ENCODE measurements at regions of chr12 and their contacts with region 1.

Region 1: GRCh38 chr12:12704593-12705230 is 8.7 kb upstream of the GPR19 start:
- DNase-seq: peak; percentile 83 to 86
- H3K4me3 ChIP-seq: no peak overlapping the region
- H3K4me3 Mint-ChIP-seq: no peak overlapping the region
- H3K27ac Mint-ChIP-seq: no peak overlapping the region
- H3K4me1 ChIP-seq: peaks cover 12% of the 10 kb centered on the region
- H3K4me1 Mint-ChIP-seq: peaks cover 15% of the 10 kb centered on the region
- H3K27me3 ChIP-seq: no peaks in the 10 kb centered on the region
- H3K27me3 Mint-ChIP-seq: no peaks in the 10 kb centered on the region
- CTCF ChIP-seq: peak; percentile 98

Region 2: DNA sequence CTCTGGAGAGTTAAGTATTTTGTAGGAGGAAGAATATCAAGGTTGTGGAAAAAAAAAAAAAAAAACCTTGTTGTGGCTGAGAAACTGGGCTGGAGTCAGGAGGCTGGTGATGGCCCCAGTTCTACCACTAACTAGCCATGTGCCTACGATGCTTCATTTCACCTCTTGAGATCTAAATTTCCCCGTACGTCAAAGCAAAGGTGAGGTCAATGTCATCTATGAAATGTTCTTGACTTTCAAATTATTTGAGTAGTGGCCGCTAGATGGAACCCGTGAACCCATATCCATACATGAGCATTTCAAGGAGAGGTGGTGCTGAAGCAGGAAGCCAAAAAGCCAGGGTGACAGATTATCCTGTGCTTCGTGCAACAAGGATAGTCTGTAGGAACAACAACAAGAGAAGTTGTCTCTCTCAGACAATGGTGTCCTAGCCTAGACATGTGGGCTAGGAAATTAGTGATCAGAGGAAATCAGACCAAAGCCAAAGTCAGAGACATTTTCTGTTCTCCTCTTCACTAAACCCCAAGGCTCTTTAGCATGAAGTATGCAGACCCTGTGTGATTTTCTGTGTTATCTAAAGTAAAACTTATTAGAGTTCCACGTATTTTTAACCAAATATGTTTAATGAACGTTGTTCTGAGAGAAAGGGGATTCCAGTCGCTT is 1150.7 kb before region 1 on chr12:
- CTCF ChIA-PET with region 1: no interaction called
- POLR2A ChIA-PET with region 1: no interaction called
- intact Hi-C with region 1: loop called (anchors 5 kb)
- DNase-seq: peak; percentile 65 to 70
- H3K4me3 ChIP-seq: no peak overlapping the region
- H3K4me3 Mint-ChIP-seq: no peak overlapping the region
- H3K27ac Mint-ChIP-seq: no peak overlapping the region
- H3K4me1 ChIP-seq: peaks cover 8% of the 10 kb centered on the region; the same call in 1 of the 2 replicates
- H3K4me1 Mint-ChIP-seq: peaks cover 12% of the 10 kb centered on the region
- H3K27me3 ChIP-seq: 0 out of 2 replicates have a peak, but pooled peaks cover 1% of the 10 kb centered on the region
- H3K27me3 Mint-ChIP-seq: peaks cover 22% of the 10 kb centered on the region
- CTCF ChIP-seq: peak; percentile 70 to 73

Region 3: GRCh38 chr12:12032851-12033588 is 671.7 kb before region 1 on chr12:
- CTCF ChIA-PET with region 1: no interaction called
- POLR2A ChIA-PET with region 1: no interaction called
- intact Hi-C with region 1: loop called (anchors 1 kb)
- DNase-seq: peak; percentile 88 to 90
- H3K4me3 ChIP-seq: peak overlapping the region; percentile 33
- H3K4me3 Mint-ChIP-seq: peak overlapping the region; percentile 63
- H3K27ac Mint-ChIP-seq: no peak overlapping the region
- H3K4me1 ChIP-seq: peaks cover 21% of the 10 kb centered on the region
- H3K4me1 Mint-ChIP-seq: peaks cover 13% of the 10 kb centered on the region
- H3K27me3 ChIP-seq: no peaks in the 10 kb centered on the region
- H3K27me3 Mint-ChIP-seq: no peaks in the 10 kb centered on the region
- CTCF ChIP-seq: peak; percentile 96 to 97

Region 4: GRCh38 chr12:12334367-12335040 is 370.2 kb before region 1 on chr12:
- CTCF ChIA-PET with region 1: no interaction called
- POLR2A ChIA-PET with region 1: no interaction called
- intact Hi-C with region 1: loop called (anchors 1 kb)
- DNase-seq: peak; percentile 75 to 83
- H3K4me3 ChIP-seq: no peak overlapping the region
- H3K4me3 Mint-ChIP-seq: no peak overlapping the region
- H3K27ac Mint-ChIP-seq: peak overlapping the region; percentile 34
- H3K4me1 ChIP-seq: peaks cover 16% of the 10 kb centered on the region
- H3K4me1 Mint-ChIP-seq: peaks cover 31% of the 10 kb centered on the region
- H3K27me3 ChIP-seq: no peaks in the 10 kb centered on the region
- H3K27me3 Mint-ChIP-seq: no peaks in the 10 kb centered on the region
- CTCF ChIP-seq: peak; percentile 89 to 99

Region 5: GRCh38 chr12:12376646-12377448 is 327.9 kb before region 1 on chr12:
- CTCF ChIA-PET with region 1: no interaction called
- POLR2A ChIA-PET with region 1: no interaction called
- intact Hi-C with region 1: loop called (anchors 1 kb)
- DNase-seq: peak; percentile 64 to 71
- H3K4me3 ChIP-seq: no peak overlapping the region
- H3K4me3 Mint-ChIP-seq: no peak overlapping the region
- H3K27ac Mint-ChIP-seq: no peak overlapping the region
- H3K4me1 ChIP-seq: peaks cover 34% of the 10 kb centered on the region
- H3K4me1 Mint-ChIP-seq: peaks cover 38% of the 10 kb centered on the region
- H3K27me3 ChIP-seq: no peaks in the 10 kb centered on the region
- H3K27me3 Mint-ChIP-seq: no peaks in the 10 kb centered on the region
- CTCF ChIP-seq: peak; percentile 72 to 96

Region 6: DNA sequence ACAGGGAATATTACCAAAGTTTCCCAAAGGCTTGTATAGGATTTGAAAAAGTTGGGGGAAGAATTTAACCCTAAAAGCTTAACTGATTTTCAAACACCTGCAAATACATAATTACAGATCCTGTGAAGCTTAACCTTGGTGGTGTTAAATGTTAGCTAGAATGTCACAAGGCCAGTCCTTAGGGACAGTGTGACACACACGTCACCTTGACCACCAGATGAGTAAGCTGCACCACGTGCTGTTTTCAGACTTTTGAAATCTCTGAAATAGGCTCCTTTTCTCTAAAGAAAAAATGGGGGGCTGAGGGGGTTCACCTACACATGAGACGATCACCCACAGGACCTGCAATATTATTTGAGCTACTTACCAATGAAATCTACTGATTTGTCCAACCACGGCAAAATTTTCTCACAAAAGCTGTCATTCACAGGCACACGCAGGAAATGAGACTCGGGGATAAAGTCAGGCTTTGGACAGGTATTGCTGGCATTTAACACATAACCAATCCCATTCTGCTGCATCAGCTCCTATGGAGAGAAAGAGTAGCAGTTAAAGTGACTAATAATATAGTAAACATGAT is 218.0 kb before region 1 on chr12:
- CTCF ChIA-PET with region 1: no interaction called
- POLR2A ChIA-PET with region 1: no interaction called
- intact Hi-C with region 1: loop called (anchors 5 kb)
- DNase-seq: no peak
- H3K4me3 ChIP-seq: no peak overlapping the region
- H3K4me3 Mint-ChIP-seq: no peak overlapping the region
- H3K27ac Mint-ChIP-seq: no peak overlapping the region
- H3K4me1 ChIP-seq: peaks cover 26% of the 10 kb centered on the region
- H3K4me1 Mint-ChIP-seq: no peaks in the 10 kb centered on the region
- H3K27me3 ChIP-seq: no peaks in the 10 kb centered on the region
- H3K27me3 Mint-ChIP-seq: no peaks in the 10 kb centered on the region
- CTCF ChIP-seq: no peak

Region 7: GRCh38 chr12:12582895-12583303 is 121.8 kb before region 1 on chr12:
- CTCF ChIA-PET with region 1: no interaction called
- POLR2A ChIA-PET with region 1: no interaction called
- intact Hi-C with region 1: no loop called
- DNase-seq: peak; percentile 67 to 72
- H3K4me3 ChIP-seq: no peak overlapping the region
- H3K4me3 Mint-ChIP-seq: no peak overlapping the region
- H3K27ac Mint-ChIP-seq: no peak overlapping the region
- H3K4me1 ChIP-seq: peaks cover 34% of the 10 kb centered on the region
- H3K4me1 Mint-ChIP-seq: peaks cover 35% of the 10 kb centered on the region
- H3K27me3 ChIP-seq: no peaks in the 10 kb centered on the region
- H3K27me3 Mint-ChIP-seq: no peaks in the 10 kb centered on the region
- CTCF ChIP-seq: no peak

Region 8: DNA sequence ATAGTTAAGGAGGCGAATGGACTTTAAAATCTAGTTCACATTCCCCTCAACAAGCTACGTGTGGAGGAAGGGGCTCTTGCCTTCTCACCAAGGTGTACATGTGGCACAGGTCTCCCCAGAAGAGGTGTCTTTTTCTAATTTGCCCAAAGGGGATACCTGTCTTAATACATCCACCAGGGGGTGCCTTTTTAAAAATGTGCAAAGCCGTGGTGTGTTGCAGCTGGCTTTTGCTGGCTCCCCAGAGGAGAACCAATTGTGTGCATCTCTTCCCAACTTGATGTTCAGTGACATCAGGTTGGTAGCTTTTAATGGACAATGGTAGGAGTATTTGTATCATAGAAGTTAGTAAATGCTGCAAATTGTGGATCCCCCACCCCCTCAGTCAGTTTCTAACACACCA is 59.2 kb before region 1 on chr12:
- CTCF ChIA-PET with region 1: no interaction called
- POLR2A ChIA-PET with region 1: no interaction called
- intact Hi-C with region 1: loop called (anchors 1 kb)
- DNase-seq: peak in 1 of 2 experiments; percentile 58
- H3K4me3 ChIP-seq: no peak overlapping the region
- H3K4me3 Mint-ChIP-seq: no peak overlapping the region
- H3K27ac Mint-ChIP-seq: no peak overlapping the region
- H3K4me1 ChIP-seq: no peaks in the 10 kb centered on the region
- H3K4me1 Mint-ChIP-seq: no peaks in the 10 kb centered on the region
- H3K27me3 ChIP-seq: no peaks in the 10 kb centered on the region
- H3K27me3 Mint-ChIP-seq: no peaks in the 10 kb centered on the region
- CTCF ChIP-seq: peak; percentile 42 to 59

Region 9: DNA sequence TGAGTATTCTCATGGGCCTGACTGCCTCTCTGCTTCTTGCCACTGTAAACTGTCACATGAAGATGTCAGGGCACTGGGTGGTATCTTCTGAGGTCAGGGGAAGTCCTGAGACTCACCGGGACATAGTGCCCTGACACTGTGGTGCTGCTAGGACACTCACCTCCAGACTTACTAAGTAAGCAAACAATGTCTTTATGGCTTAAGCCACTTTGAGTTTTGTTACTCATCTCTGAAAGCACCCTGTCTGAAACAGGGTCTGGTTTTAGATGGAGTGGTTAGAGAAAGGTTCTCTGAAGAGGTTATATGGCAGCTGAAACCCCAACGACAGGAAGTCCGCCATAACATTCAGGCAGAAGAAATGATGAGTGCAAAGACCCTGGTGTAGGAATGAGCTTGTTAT is 31.4 kb before region 1 on chr12:
- CTCF ChIA-PET with region 1: no interaction called
- POLR2A ChIA-PET with region 1: no interaction called
- intact Hi-C with region 1: no loop called
- DNase-seq: no peak
- H3K4me3 ChIP-seq: no peak overlapping the region
- H3K4me3 Mint-ChIP-seq: no peak overlapping the region
- H3K27ac Mint-ChIP-seq: no peak overlapping the region
- H3K4me1 ChIP-seq: no peaks in the 10 kb centered on the region; the same call in 1 of the 2 replicates
- H3K4me1 Mint-ChIP-seq: peaks cover 5% of the 10 kb centered on the region
- H3K27me3 ChIP-seq: no peaks in the 10 kb centered on the region
- H3K27me3 Mint-ChIP-seq: no peaks in the 10 kb centered on the region
- CTCF ChIP-seq: no peak

Region 10: DNA sequence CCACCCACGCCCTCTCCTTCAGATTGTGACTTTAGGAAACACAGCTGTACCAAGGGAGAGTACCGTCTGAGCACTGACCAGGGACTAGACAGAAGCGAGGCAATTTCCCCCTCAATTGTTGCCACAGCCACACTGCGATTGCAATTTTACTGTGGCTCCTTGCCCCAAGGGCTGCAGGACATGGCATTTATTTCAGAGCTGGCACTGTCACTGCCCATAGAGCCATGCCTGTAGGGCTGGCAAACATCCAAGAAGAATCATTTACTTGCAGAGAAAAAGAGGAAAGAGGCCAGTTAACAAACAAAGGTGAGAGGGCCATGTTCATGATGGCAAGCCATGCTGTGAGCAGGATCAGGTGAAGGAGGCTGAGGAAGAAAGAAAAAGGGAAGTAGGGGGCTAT is 621.4 kb after region 1 on chr12:
- CTCF ChIA-PET with region 1: no interaction called
- POLR2A ChIA-PET with region 1: no interaction called
- intact Hi-C with region 1: no loop called
- DNase-seq: no peak
- H3K4me3 ChIP-seq: no peak overlapping the region
- H3K4me3 Mint-ChIP-seq: no peak overlapping the region
- H3K27ac Mint-ChIP-seq: no peak overlapping the region
- H3K4me1 ChIP-seq: no peaks in the 10 kb centered on the region
- H3K4me1 Mint-ChIP-seq: no peaks in the 10 kb centered on the region
- H3K27me3 ChIP-seq: no peaks in the 10 kb centered on the region; the same call in 1 of the 2 replicates
- H3K27me3 Mint-ChIP-seq: peaks cover 21% of the 10 kb centered on the region
- CTCF ChIP-seq: no peak